ENCODE measurements at regions of chr11 and their contacts with region 1.

Region 1: DNA sequence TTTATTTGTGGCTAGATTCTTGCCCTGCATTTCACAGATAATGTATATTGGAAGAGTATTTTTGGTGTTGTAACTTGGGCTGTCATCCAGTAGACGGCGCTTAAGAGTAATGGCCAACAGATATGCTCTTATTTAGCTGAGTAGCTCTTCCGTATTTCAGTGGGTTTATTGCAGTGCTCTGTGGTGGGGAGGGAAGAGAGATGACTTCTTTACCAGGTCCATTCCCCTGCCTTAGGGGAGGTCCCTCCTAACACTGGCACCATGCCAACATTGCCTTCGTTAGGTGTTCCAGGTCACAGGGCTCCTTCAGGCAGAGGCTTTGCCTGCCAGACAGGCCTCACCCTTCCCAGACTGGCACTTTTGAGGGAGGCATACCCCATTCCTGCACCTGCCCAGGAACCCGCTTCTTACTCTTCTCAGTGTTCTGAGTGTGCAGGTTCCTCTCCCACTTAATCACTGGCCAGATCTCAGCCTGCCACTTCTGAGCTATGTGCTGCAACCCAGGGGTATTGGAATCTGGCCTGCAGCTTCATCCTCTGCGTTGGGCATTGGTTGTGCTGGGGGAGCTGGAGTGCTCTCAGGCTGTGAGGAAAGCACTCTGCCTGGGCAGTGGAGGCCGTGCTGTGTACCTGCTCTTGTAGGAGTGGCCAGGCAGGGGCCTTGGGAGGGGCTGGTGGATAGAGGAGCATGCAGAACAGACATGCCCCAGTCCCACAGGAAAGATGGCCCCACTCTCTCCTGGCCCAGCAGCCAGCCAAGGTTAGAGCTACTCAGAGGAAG is 29.4 kb upstream of the SLN start:
- DNase-seq: no peak
- ATAC-seq: peak in 1 of 4 donors; percentile 6
- H3K4me3 ChIP-seq: no peak overlapping the region
- H3K27ac ChIP-seq: peak overlapping the region; percentile 87
- H3K4me1 ChIP-seq: peaks cover 11% of the 10 kb centered on the region
- H3K27me3 ChIP-seq: no peaks in the 10 kb centered on the region
- CTCF ChIP-seq: peak; percentile 27

Region 2: DNA sequence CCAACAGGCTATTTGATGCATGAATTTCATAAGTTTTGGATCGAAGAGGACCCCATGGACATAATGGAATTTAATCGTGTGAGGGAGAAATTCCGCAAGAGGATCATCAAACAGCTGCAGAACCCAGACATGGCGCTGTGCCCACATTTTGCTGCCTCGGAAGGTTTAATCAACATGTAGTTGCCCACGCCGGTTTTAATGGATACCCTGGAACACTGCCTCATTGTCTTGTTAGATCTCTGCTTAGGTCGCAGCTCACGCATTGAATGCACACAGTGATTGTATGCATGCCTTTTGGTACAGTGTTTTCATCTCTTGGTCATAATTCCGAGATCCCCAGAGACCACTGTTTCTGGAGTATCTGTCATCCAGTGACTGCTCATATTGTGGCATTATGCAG is 76.2 kb before region 1 on chr11:
- intact Hi-C with region 1: no loop called
- DNase-seq: no peak
- ATAC-seq: no peak
- H3K4me3 ChIP-seq: no peak overlapping the region
- H3K27ac ChIP-seq: no peak overlapping the region
- H3K4me1 ChIP-seq: peaks cover 5% of the 10 kb centered on the region
- H3K27me3 ChIP-seq: peaks cover 0 to 5% (median 0%) of the 10 kb centered on the region in 3 donors
- CTCF ChIP-seq: no peak

Region 3: GRCh38 chr11:107705027-107705426 is 36.2 kb before region 1 on chr11:
- intact Hi-C with region 1: loop called in 1 of 2 experiments (anchors 5 kb)
- DNase-seq: no peak
- ATAC-seq: peak; percentile 69 to 88 (median 87)
- H3K4me3 ChIP-seq: no peak overlapping the region
- H3K27ac ChIP-seq: peak overlapping the region; percentile 91
- H3K4me1 ChIP-seq: peaks cover 43% of the 10 kb centered on the region
- H3K27me3 ChIP-seq: no peaks in the 10 kb centered on the region
- CTCF ChIP-seq: no peak

Region 4: DNA sequence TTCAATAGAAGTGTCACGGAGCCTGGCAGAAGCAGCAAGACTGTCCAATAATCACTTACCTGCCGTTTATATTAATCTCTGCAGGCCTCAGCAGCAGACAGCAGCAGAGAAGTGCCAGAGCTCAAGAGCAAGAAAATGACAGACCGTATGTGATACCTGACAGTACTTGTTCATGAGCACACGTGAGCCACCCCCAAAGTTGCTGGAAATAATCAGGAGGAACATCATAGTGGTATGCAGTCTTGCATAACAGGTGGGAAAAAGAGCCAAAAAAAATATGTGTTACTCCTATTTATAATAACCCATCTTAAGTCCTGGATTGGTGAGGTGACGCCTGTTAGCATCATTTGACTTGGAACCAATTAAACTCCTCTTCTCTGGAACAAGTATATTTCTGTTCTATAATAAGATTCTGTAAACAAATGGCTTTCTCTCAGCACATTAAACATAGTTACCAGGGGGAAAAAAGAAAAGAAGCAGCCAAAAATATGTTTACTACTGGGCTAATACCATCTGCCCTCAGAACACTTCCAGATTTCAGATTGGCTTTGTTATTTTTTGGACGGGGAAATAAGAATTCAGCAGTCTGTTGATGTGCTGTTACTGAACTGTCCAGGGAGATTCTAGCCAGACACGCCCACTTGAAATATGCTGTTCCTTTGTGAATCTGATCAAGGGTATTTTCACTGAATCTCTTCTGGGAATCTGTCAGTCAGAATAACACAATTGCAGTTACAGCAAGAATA is 21.5 kb before region 1 on chr11:
- intact Hi-C with region 1: loop called in 1 of 2 experiments (anchors 2 kb)
- DNase-seq: no peak
- ATAC-seq: peak; percentile 73 to 85 (median 84)
- H3K4me3 ChIP-seq: peak overlapping the region; percentile 52
- H3K27ac ChIP-seq: peak overlapping the region; percentile 91
- H3K4me1 ChIP-seq: peaks cover 54% of the 10 kb centered on the region
- H3K27me3 ChIP-seq: no peaks in the 10 kb centered on the region
- CTCF ChIP-seq: no peak

Region 5: DNA sequence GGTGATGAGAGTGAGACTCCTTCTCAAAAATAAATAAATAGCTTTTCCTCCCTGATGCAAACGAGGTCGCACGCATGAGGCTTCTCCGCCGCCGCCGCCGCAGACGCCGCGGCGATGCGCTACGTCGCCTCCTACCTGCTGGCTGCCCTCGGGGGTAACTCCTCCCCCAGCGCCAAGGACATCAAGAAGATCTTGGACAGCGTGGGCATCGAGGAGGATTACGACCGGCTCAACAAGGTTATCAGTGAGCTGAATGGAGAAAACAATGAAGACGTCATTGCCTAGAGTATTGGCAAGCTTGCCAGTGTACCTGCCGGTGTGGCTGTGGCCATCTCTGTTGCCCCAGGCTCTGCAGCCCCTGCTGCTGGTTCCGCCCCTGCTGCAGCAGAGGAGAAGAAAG is 167.1 kb after region 1 on chr11:
- intact Hi-C with region 1: no loop called
- DNase-seq: no peak
- ATAC-seq: no peak
- H3K4me3 ChIP-seq: no peak overlapping the region
- H3K27ac ChIP-seq: no peak overlapping the region
- H3K4me1 ChIP-seq: no peaks in the 10 kb centered on the region
- H3K27me3 ChIP-seq: peaks cover 0 to 3% (median 0%) of the 10 kb centered on the region in 3 donors
- CTCF ChIP-seq: no peak

Measured in psoas muscle (tissue), 8 donors.